A549 (cell line): ENCODE measurements at regions of chr15 and their contacts with region 1.

Region 1: GRCh38 chr15:41989259-41989933 is 17.0 kb upstream of the EHD4 start:
- DNase-seq: peak; percentile 66 to 73
- ATAC-seq: peak; percentile 92 to 98
- H3K4me3 ChIP-seq: no peak overlapping the region
- H3K27ac ChIP-seq: peak overlapping the region; percentile 24 to 65; a peak in 3 of 6 replicates
- H3K4me1 ChIP-seq: no peaks in the 10 kb centered on the region
- CTCF ChIP-seq: peak; percentile 74
- EP300 ChIP-seq: no peak
- POLR2A ChIP-seq: no peak
- RAD21 ChIP-seq: peak; percentile 93 to 95

Region 2: DNA sequence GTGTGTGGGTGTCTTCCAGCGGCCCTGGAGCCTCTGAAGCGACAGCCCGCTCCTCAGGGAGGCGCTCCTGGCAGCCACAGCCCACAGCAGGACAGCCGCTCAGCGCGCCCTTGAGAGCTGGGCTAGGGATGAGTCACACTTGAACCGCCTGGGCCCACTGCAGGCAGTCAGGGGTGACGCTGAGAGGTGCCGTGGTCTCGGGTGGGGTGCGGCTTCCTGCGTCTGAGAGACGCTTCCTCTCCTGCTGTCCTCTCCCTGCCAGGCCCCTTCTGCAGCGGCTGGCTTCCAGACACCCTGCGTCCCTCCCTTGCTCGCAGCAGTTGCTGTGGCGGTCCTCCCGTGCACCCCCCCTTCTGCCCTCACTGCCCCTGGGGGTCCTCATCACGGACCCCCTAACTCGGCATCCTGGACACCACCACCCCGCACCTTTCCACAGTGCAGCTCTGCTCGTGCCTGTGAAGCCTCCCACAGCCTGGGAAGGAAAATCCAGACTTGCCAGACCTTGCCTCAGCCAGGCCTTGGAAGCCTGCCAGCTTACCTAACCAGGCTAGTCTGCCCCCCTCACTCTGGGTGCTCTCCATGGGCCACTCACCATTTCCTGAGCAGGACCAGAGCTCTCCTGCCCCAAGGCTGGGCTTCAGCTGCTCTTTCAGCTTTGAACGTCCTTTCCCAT is 94.5 kb before region 1 on chr15:
- CTCF ChIA-PET with region 1: no interaction called
- POLR2A ChIA-PET with region 1: no interaction called
- DNase-seq: peak in 1 of 2 experiments; percentile 13
- ATAC-seq: peak; percentile 41 to 67; a peak in 3 of 6 replicates
- H3K4me3 ChIP-seq: no peak overlapping the region
- H3K27ac ChIP-seq: peak overlapping the region; percentile 55 to 76; a peak in 4 of 6 replicates
- H3K4me1 ChIP-seq: peaks cover 11% of the 10 kb centered on the region; the same call in 2 of the 3 replicates
- CTCF ChIP-seq: no peak
- EP300 ChIP-seq: no peak
- POLR2A ChIP-seq: no peak
- RAD21 ChIP-seq: no peak

Region 3: DNA sequence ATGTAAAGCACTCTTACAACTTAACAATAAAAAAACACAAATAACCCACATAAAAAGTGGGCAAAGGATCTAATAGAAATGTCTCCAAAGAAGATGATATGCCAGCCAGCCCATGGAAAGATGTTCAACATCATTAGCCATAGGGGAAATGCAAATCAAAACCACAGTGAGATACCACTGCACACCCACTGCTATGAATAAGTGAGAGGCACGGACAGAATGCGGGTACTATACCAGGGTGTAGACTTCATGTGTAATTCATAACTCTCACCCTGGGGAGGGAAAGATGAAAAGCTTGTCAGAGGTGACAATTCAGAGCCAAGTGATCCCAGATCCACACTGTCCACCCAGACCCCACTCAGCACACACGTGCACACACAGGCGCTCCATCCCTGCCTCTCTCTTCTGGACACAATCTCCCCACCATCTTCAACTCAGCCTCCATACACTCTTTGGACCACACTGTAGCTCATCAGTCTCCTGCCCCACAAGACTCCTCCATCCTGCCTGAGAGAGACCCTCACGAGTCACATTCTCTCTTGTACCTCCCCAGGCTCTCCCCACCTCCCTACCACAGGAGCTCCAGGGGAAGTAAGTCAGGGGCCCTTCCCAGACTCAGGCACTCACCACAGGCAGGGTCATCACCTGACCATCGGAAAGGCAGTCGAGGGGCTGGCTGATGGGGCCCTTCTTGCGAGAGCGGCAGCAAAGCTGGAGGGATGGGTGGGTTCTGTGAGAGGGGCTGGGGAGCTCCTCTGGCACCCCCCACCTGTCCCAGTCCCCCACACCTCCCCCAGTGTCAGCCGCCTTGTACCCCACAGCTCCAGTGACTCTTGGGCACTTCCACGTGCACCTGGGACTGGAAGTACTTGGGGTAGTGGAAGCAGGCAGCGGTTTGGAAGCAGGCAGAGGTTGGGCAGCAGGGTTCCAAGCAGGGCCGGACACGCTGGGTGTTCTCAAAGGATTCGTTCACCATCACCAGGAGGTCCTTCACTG is 10.2 kb after region 1 on chr15:
- CTCF ChIA-PET with region 1: interaction called, 43 read pairs
- POLR2A ChIA-PET with region 1: no interaction called
- DNase-seq: no peak
- ATAC-seq: no peak
- H3K4me3 ChIP-seq: no peak overlapping the region
- H3K27ac ChIP-seq: no peak overlapping the region
- H3K4me1 ChIP-seq: no peaks in the 10 kb centered on the region
- CTCF ChIP-seq: no peak
- EP300 ChIP-seq: no peak
- POLR2A ChIP-seq: no peak
- RAD21 ChIP-seq: no peak

Region 4: DNA sequence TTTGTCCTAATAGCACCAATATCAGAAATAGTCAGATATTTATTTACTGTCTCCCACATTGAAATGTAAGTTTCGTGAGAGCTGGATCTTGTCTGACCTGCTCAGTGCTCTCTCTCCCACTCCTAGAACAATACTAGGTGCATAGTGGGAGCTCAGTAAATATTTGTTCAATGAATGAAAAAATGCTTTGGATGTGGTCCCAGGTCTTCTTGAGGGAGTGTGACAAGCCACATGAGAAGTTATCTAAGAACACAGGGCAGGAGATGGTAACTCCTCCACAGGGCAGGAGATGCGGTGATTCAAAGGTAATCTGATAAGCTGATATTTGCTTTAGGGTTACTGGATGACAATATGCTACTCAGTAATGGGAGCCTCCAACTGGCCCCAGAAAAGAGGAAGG is 57.2 kb after region 1 on chr15:
- CTCF ChIA-PET with region 1: interaction called, 96 read pairs
- POLR2A ChIA-PET with region 1: no interaction called
- DNase-seq: peak; percentile 38 to 79
- ATAC-seq: peak; percentile 71 to 81
- H3K4me3 ChIP-seq: no peak overlapping the region
- H3K27ac ChIP-seq: peak overlapping the region; percentile 70 to 72
- H3K4me1 ChIP-seq: peaks cover 29% of the 10 kb centered on the region
- CTCF ChIP-seq: no peak
- EP300 ChIP-seq: peak in 1 of 2 experiments; percentile 44; a peak in 1 of 5 replicates
- POLR2A ChIP-seq: no peak
- RAD21 ChIP-seq: no peak

Region 5: DNA sequence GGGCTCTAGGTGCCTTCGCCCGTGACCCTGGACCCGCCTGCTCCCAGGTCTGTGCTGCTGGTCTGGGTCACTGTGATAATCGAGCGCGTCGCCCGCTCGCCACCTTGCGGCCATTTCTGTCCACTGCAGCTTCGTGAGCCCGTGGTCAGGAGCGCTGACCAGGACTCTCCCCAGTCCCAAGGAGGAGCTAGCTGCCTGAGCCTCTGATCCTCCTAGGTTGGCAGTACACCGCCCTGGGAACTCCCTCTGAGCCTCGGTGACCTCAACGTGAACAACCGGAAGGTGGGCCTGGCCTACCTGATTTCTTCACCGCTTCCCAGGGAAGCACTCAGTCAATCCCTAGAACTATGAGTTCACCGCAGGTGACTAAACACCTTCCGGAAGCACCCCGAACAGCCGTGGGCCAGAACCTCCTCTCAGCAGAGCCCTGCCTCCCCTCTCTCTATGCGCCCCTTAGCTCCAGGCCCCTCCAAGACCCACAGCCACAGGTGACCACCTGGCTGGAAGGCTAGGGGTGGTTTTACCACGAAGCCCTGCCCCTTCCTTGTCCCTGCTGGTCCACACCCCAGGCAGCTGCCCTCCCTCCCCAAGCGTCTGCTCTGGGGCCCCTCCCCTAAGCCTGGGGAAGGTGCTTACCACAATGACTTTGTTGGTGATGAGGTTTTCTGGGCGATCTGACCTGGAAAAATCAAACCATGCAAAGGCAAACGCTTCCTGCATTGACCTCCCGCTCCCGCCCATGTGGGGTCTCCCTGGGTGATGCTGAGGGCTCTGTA is 95.3 kb after region 1 on chr15:
- CTCF ChIA-PET with region 1: interaction called, 247 read pairs
- POLR2A ChIA-PET with region 1: no interaction called
- DNase-seq: peak; percentile 52 to 66
- ATAC-seq: peak; percentile 86 to 96
- H3K4me3 ChIP-seq: no peak overlapping the region
- H3K27ac ChIP-seq: 0 out of 6 replicates have a peak overlapping the region, but pooled peaks of 1 of the 2 experiments have one; percentile 28
- H3K4me1 ChIP-seq: no peaks in the 10 kb centered on the region
- CTCF ChIP-seq: peak; percentile 67
- EP300 ChIP-seq: no peak
- POLR2A ChIP-seq: no peak
- RAD21 ChIP-seq: peak; percentile 64 to 78

Region 6: GRCh38 chr15:42137431-42138261 is 148.2 kb after region 1 on chr15:
- CTCF ChIA-PET with region 1: interaction called, 28 read pairs
- POLR2A ChIA-PET with region 1: no interaction called
- DNase-seq: peak; percentile 43 to 47
- ATAC-seq: peak; percentile 68 to 77; a peak in 4 of 6 replicates
- H3K4me3 ChIP-seq: no peak overlapping the region
- H3K27ac ChIP-seq: no peak overlapping the region
- H3K4me1 ChIP-seq: peaks cover 25% of the 10 kb centered on the region
- CTCF ChIP-seq: peak; percentile 60
- EP300 ChIP-seq: no peak
- POLR2A ChIP-seq: no peak
- RAD21 ChIP-seq: peak; percentile 60 to 64